ENCODE measurements at regions of chr9 and their contacts with region 1.

Region 1: DNA sequence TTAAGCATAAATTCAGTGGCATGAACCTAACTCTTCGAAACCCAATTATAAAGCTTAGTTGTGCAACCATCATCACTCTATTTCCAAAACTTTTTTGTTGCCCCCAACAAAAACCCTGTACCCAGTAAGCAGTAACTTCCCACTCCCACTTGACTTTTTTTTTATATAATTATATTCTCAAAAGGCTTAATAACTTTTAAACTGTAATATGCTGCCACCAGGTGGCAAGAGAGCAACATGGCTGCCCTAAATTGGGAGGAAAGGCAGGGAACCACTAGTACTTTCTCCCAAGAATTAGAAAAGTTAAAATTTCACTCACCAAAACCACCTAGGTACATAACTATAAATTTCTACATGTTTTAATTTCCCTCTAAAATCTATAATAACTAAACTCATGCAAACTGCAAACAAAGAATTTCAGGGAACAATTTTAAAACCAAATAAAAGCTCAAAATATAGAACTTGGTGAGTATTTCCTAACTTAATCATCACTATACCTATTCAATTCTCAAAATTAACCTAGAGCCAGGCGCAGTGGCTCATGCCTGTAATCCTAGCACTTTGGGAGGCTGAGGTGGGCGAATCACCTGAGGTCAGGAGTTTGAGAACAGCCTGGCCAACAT is 50.2 kb upstream of the RNF38 start:
- H3K4me3 ChIP-seq: no peak overlapping the region
- H3K27ac ChIP-seq: no peak overlapping the region
- H3K4me1 ChIP-seq: no peaks in the 10 kb centered on the region
- CTCF ChIP-seq: no peak

Region 2: GRCh38 chr9:36074870-36075532 is 375.2 kb before region 1 on chr9:
- CTCF ChIA-PET with region 1: no interaction called
- POLR2A ChIA-PET with region 1: no interaction called
- H3K4me3 ChIP-seq: no peak overlapping the region
- H3K27ac ChIP-seq: no peak overlapping the region
- H3K4me1 ChIP-seq: peaks cover 2% of the 10 kb centered on the region; the same call in 1 of the 2 replicates
- CTCF ChIP-seq: no peak

Region 3: GRCh38 chr9:36400332-36401163 is 49.7 kb before region 1 on chr9:
- CTCF ChIA-PET with region 1: interaction called, 275 read pairs
- POLR2A ChIA-PET with region 1: interaction called, 4 read pairs
- H3K4me3 ChIP-seq: peak overlapping the region; percentile 97
- H3K27ac ChIP-seq: peak overlapping the region; percentile 90
- H3K4me1 ChIP-seq: peaks cover 5% of the 10 kb centered on the region
- CTCF ChIP-seq: peak; percentile 36; the same call in 1 of the 2 replicates

Region 4: GRCh38 chr9:36423206-36423605 is 27.0 kb before region 1 on chr9:
- CTCF ChIA-PET with region 1: interaction called, 24 read pairs
- POLR2A ChIA-PET with region 1: no interaction called
- H3K4me3 ChIP-seq: no peak overlapping the region
- H3K27ac ChIP-seq: no peak overlapping the region
- H3K4me1 ChIP-seq: peaks cover 4% of the 10 kb centered on the region; the same call in 1 of the 2 replicates
- CTCF ChIP-seq: no peak

Region 5: DNA sequence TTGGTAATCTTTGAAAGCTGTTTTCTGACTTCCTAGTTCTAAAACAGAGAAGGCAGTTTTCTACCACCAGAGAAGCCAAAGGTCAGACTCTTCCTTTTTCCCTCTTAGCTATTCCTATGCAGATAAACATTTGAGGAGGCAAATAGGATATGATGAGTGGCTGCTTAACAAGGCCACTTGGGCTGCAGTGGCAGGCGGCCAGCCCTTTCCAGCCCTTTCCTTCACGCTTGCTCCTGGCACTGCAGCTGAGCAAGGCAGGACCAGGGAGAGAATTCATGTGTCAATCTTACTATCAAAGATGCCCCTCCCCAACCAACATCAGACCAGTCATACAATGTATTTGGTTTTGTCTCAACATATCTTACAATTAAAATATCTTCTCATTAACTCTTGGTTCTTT is 13.3 kb before region 1 on chr9:
- CTCF ChIA-PET with region 1: interaction called, 17 read pairs
- POLR2A ChIA-PET with region 1: no interaction called
- H3K4me3 ChIP-seq: no peak overlapping the region
- H3K27ac ChIP-seq: no peak overlapping the region
- H3K4me1 ChIP-seq: no peaks in the 10 kb centered on the region
- CTCF ChIP-seq: no peak

Region 6: DNA sequence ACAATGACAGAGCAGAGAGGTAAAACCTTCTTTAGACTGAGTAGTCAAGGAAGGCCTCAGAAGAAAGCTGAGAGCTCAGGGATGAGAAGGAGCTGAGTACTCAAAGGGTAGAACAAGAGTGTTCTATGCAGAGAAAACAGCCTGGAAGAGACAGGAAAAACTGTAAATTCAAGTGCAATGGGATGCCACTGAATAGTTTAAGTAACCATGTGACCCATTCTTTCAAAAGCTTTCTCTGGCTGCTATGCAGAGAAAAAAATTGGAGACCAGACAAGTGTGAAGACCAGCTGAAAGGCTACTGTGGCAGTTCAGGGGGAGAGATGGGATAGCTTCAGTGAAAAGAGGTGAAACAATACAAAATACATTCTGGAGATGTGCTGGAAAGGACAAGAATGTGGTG is 11.1 kb after region 1 on chr9:
- CTCF ChIA-PET with region 1: interaction called, 14 read pairs
- POLR2A ChIA-PET with region 1: no interaction called
- H3K4me3 ChIP-seq: no peak overlapping the region
- H3K27ac ChIP-seq: no peak overlapping the region
- H3K4me1 ChIP-seq: no peaks in the 10 kb centered on the region
- CTCF ChIP-seq: no peak

Region 7: DNA sequence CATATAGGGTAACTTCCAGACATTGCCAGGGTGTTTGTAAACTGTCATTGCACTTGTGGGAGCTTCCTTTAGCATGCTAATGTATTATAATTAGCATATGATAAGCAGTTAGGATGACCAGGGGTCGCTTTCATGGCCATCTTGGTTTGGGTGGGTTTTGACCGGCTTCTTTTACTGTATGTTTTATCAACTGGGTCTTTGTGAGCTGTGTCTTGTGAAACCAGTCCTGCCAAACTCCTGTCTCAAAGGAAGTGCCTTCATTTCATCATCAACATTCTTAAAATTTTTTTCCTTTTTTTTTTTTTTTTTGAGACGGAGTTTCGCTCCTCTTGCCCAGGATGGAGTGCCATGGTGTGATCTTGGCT is 110.6 kb after region 1 on chr9:
- CTCF ChIA-PET with region 1: interaction called, 17 read pairs
- POLR2A ChIA-PET with region 1: no interaction called
- H3K4me3 ChIP-seq: no peak overlapping the region
- H3K27ac ChIP-seq: no peak overlapping the region
- H3K4me1 ChIP-seq: no peaks in the 10 kb centered on the region
- CTCF ChIP-seq: no peak

Measured in HEK293 (cell line).